CD4-positive, alpha-beta memory T cell (primary cell): ENCODE measurements at regions of chr2 and their contacts with region 1.

Region 1: GRCh38 chr2:237744613-237745249 is 53.8 kb upstream of the RBM44 start:
- DNase-seq: peak; percentile 67 to 78 (median 73)
- H3K4me3 ChIP-seq: no peak overlapping the region
- H3K4me3 Mint-ChIP-seq: peak overlapping the region in 1 of 8 donors; percentile 3
- H3K27ac ChIP-seq: peak overlapping the region; percentile 35
- H3K27ac Mint-ChIP-seq: peak overlapping the region; percentile 85 to 95 (median 92)
- H3K4me1 ChIP-seq: peaks cover 32% of the 10 kb centered on the region
- H3K4me1 Mint-ChIP-seq: peaks cover 32 to 61% (median 42%) of the 10 kb centered on the region in 4 donors
- H3K27me3 ChIP-seq: no peaks in the 10 kb centered on the region
- H3K27me3 Mint-ChIP-seq: no peaks in the 10 kb centered on the region

Region 2: GRCh38 chr2:237572021-237572741 is 172.6 kb before region 1 on chr2:
- CTCF ChIA-PET with region 1: interaction called, 27 read pairs
- POLR2A ChIA-PET with region 1: no interaction called
- intact Hi-C with region 1: no loop called
- DNase-seq: peak; percentile 73 to 80 (median 77)
- H3K4me3 ChIP-seq: no peak overlapping the region
- H3K4me3 Mint-ChIP-seq: no peak overlapping the region
- H3K27ac ChIP-seq: no peak overlapping the region
- H3K27ac Mint-ChIP-seq: peak overlapping the region in 1 of 7 donors; percentile 53
- H3K4me1 ChIP-seq: no peaks in the 10 kb centered on the region
- H3K4me1 Mint-ChIP-seq: peaks cover 0 to 6% (median 3%) of the 10 kb centered on the region in 4 donors
- H3K27me3 ChIP-seq: no peaks in the 10 kb centered on the region
- H3K27me3 Mint-ChIP-seq: peaks cover 4 to 6% of the 10 kb centered on the region in 2 donors

Region 3: GRCh38 chr2:237660380-237660904 is 84.3 kb before region 1 on chr2:
- CTCF ChIA-PET with region 1: interaction called, 12 read pairs
- POLR2A ChIA-PET with region 1: interaction called, 3 read pairs
- intact Hi-C with region 1: no loop called
- DNase-seq: no peak
- H3K4me3 ChIP-seq: no peak overlapping the region
- H3K4me3 Mint-ChIP-seq: no peak overlapping the region
- H3K27ac ChIP-seq: no peak overlapping the region
- H3K27ac Mint-ChIP-seq: peak overlapping the region in 1 of 7 donors; percentile 50
- H3K4me1 ChIP-seq: no peaks in the 10 kb centered on the region
- H3K4me1 Mint-ChIP-seq: peaks cover 6 to 14% (median 8%) of the 10 kb centered on the region in 4 donors
- H3K27me3 ChIP-seq: no peaks in the 10 kb centered on the region
- H3K27me3 Mint-ChIP-seq: peaks cover 1 to 7% of the 10 kb centered on the region in 2 donors

Region 4: DNA sequence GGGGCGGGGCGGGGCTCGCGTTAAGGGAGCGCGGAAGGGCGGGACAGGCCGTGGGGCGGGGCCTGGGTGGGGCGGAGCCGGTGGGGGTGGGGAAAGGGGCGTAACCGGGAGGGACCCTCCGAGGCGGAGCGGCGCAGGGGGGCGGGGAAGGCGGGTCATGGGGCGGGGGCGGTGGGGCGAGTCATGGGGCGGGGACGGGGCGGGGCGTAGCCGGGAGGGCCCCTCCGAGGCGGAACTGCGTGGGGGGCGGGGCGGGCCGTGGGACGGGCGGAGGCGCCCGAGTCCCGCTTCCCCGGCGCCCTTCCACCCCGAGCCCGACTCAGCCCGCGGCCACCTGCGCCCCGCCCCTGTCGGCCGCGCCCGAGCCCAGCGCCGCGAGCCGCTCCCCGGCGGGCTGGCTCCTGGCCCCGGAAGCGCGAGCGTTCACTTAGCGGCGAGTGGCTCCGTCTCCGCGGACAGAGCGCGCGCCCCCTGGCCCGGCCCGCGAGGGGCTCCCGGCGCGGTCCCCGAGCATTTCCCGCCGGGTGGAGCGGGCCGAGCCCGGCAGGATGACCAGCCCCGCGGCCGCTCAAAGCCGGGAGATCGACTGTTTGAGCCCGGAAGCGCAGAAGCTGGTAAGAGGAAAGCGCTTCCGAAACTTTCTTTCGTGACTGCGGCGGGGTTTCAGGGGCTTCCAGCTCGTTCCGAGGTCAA is 52.7 kb before region 1 on chr2:
- CTCF ChIA-PET with region 1: interaction called, 154 read pairs
- POLR2A ChIA-PET with region 1: interaction called, 17 read pairs
- intact Hi-C with region 1: loop called (anchors 1 kb)
- DNase-seq: peak; percentile 91 to 94 (median 93)
- H3K4me3 ChIP-seq: peak overlapping the region; percentile 79 to 89
- H3K4me3 Mint-ChIP-seq: peak overlapping the region; percentile 90 to 97 (median 93)
- H3K27ac ChIP-seq: peak overlapping the region; percentile 96
- H3K27ac Mint-ChIP-seq: peak overlapping the region; percentile 93 to 99 (median 97)
- H3K4me1 ChIP-seq: peaks cover 76% of the 10 kb centered on the region
- H3K4me1 Mint-ChIP-seq: peaks cover 55 to 82% (median 69%) of the 10 kb centered on the region in 4 donors
- H3K27me3 ChIP-seq: no peaks in the 10 kb centered on the region
- H3K27me3 Mint-ChIP-seq: no peaks in the 10 kb centered on the region

Region 5: DNA sequence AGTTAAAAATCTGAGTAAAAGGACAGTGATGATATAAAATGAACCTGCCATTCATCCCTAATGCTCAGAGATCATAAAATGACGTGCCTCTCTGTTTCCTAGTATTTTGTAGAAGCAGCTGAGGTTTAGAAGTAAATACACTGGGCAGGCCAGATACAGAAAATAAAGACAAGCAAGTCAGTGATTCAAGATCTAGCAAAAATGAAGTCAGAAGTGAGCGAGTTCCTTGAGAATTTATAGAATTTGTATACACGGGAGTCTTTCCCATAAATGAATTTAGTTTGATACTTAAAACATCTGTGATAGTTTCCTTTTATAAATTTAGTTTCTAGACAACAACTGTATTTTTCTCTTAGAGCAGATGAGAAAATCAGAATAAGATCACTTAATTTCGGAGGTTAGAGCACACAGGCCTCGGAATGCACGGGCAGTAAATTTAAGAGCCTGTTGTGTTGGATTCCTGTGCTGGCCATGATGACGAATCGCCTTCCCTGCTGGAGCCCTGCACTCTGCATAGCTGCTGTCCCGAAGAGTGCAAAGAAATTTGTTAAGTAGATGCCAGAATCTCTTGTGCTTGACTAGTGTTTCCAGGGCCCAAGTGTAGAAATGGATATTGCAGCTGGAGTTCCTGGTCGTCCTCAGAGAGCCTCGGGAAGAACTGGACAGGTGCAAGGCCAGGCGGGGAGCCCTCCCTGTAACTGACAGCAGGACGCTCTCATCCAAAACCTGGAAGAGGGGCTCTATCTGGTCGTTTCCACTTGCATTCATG is 29.9 kb before region 1 on chr2:
- CTCF ChIA-PET with region 1: interaction called, 30 read pairs
- POLR2A ChIA-PET with region 1: no interaction called
- intact Hi-C with region 1: no loop called
- DNase-seq: no peak
- H3K4me3 ChIP-seq: no peak overlapping the region
- H3K4me3 Mint-ChIP-seq: peak overlapping the region in 4 of 8 donors; percentile 31 to 37 (median 34)
- H3K27ac ChIP-seq: no peak overlapping the region
- H3K27ac Mint-ChIP-seq: peak overlapping the region; percentile 12 to 88 (median 64)
- H3K4me1 ChIP-seq: peaks cover 37% of the 10 kb centered on the region
- H3K4me1 Mint-ChIP-seq: peaks cover 53 to 83% (median 66%) of the 10 kb centered on the region in 4 donors
- H3K27me3 ChIP-seq: no peaks in the 10 kb centered on the region
- H3K27me3 Mint-ChIP-seq: no peaks in the 10 kb centered on the region

Region 6: DNA sequence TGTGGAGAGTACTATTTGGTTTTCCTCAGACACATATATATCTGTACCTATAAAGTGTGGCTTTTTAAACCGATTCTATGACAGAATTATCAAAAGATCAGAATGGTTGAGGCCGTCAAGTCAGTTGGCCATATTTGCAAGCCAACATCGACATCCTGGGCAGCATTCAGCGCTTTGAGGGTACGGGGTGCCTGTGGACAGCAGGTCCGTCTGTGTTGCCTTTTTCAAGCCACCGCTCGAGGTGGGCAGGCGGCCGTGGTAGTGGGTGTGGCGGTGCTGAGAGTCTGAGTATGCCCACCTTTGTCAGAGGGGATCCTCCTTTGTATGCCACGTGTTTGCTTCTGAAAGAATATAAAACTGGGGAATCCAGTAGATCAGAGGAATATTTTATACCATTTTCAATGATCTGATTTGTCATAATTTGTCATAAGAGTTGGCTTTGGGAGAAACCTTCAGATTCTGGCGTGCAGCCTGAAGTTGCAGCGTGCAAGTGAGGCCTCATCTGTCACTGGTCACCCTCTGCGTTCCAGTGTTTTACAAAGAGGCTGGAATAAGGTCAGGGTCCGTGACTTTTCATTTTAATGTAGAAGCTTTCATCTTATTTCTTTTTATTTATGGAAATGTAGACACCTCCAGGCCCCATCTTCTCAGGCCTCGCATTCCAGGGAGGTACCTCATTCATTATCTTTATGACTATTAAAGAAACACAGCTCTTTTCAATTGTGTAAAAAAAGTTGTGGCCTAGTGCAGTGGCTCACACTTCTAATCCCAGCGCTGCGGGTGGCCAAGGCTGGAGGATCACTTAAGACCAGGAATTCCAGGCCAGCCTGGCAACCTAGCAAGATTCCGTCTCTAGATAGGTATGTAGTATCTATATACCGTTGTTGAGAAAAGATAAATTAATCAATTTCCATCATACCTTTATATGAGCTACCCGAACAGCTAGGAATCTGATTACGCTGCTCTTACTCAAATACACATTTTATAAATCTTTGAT is 16.1 kb after region 1 on chr2:
- CTCF ChIA-PET with region 1: interaction called, 10 read pairs
- POLR2A ChIA-PET with region 1: no interaction called
- intact Hi-C with region 1: no loop called
- DNase-seq: no peak
- H3K4me3 ChIP-seq: no peak overlapping the region
- H3K4me3 Mint-ChIP-seq: no peak overlapping the region
- H3K27ac ChIP-seq: no peak overlapping the region
- H3K27ac Mint-ChIP-seq: peak overlapping the region in 1 of 7 donors; percentile 7
- H3K4me1 ChIP-seq: no peaks in the 10 kb centered on the region
- H3K4me1 Mint-ChIP-seq: peaks cover 2 to 13% (median 5%) of the 10 kb centered on the region in 4 donors
- H3K27me3 ChIP-seq: no peaks in the 10 kb centered on the region
- H3K27me3 Mint-ChIP-seq: no peaks in the 10 kb centered on the region